Naive thymus-derived CD4-positive, alpha-beta T cell (primary cell): ENCODE measurements at regions of chr5 and their contacts with region 1.

Region 1: GRCh38 chr5:56155992-56156584 is 77.0 kb downstream of the ANKRD55 start:
- DNase-seq: no peak
- ATAC-seq: peak; percentile 48
- H3K4me3 ChIP-seq: no peak overlapping the region
- H3K4me3 Mint-ChIP-seq: peak overlapping the region; percentile 25 to 96 (median 94)
- H3K27ac ChIP-seq: peak overlapping the region; percentile 61
- H3K27ac Mint-ChIP-seq: peak overlapping the region; percentile 87 to 98 (median 95)
- H3K4me1 ChIP-seq: peaks cover 11 to 71% of the 10 kb centered on the region in 2 donors
- H3K4me1 Mint-ChIP-seq: peaks cover 60 to 89% (median 79%) of the 10 kb centered on the region in 7 donors
- H3K27me3 ChIP-seq: peaks cover 0 to 2% of the 10 kb centered on the region in 2 donors
- H3K27me3 Mint-ChIP-seq: no peaks in the 10 kb centered on the region

Region 2: GRCh38 chr5:55988979-55989638 is 167.0 kb before region 1 on chr5:
- CTCF ChIA-PET with region 1: interaction called, 4 read pairs
- POLR2A ChIA-PET with region 1: interaction called, 37 read pairs
- intact Hi-C with region 1: loop called in 1 of 2 experiments (anchors 2 kb)
- DNase-seq: peak in 2 of 9 donors; percentile 29 to 41
- ATAC-seq: peak; percentile 24
- H3K4me3 ChIP-seq: peak overlapping the region; percentile 10
- H3K4me3 Mint-ChIP-seq: peak overlapping the region; percentile 67 to 99 (median 96)
- H3K27ac ChIP-seq: peak overlapping the region; percentile 64
- H3K27ac Mint-ChIP-seq: peak overlapping the region in 8 of 9 donors; percentile 48 to 100 (median 96)
- H3K4me1 ChIP-seq: peaks cover 12 to 32% of the 10 kb centered on the region in 2 donors
- H3K4me1 Mint-ChIP-seq: peaks cover 47 to 86% (median 75%) of the 10 kb centered on the region in 7 donors
- H3K27me3 ChIP-seq: no peaks in the 10 kb centered on the region
- H3K27me3 Mint-ChIP-seq: no peaks in the 10 kb centered on the region

Region 3: GRCh38 chr5:56190497-56190896 is 34.4 kb after region 1 on chr5:
- CTCF ChIA-PET with region 1: interaction called, 4 read pairs
- POLR2A ChIA-PET with region 1: interaction called, 4 read pairs
- intact Hi-C with region 1: loop called in 1 of 2 experiments (anchors 1 kb)
- DNase-seq: peak in 7 of 9 donors; percentile 23 to 69 (median 57)
- ATAC-seq: peak; percentile 73
- H3K4me3 ChIP-seq: no peak overlapping the region
- H3K4me3 Mint-ChIP-seq: peak overlapping the region in 4 of 10 donors; percentile 22 to 44 (median 30)
- H3K27ac ChIP-seq: no peak overlapping the region
- H3K27ac Mint-ChIP-seq: peak overlapping the region in 7 of 9 donors; percentile 13 to 80 (median 53)
- H3K4me1 ChIP-seq: peaks cover 0 to 18% of the 10 kb centered on the region in 2 donors
- H3K4me1 Mint-ChIP-seq: peaks cover 0 to 35% (median 31%) of the 10 kb centered on the region in 7 donors
- H3K27me3 ChIP-seq: no peaks in the 10 kb centered on the region
- H3K27me3 Mint-ChIP-seq: no peaks in the 10 kb centered on the region

Region 4: GRCh38 chr5:56552612-56553268 is 396.7 kb after region 1 on chr5:
- CTCF ChIA-PET with region 1: no interaction called
- POLR2A ChIA-PET with region 1: no interaction called
- intact Hi-C with region 1: no loop called
- DNase-seq: no peak
- ATAC-seq: no peak
- H3K4me3 ChIP-seq: no peak overlapping the region
- H3K4me3 Mint-ChIP-seq: no peak overlapping the region
- H3K27ac ChIP-seq: no peak overlapping the region
- H3K27ac Mint-ChIP-seq: no peak overlapping the region
- H3K4me1 ChIP-seq: no peaks in the 10 kb centered on the region
- H3K4me1 Mint-ChIP-seq: peaks cover 0 to 9% (median 4%) of the 10 kb centered on the region in 7 donors
- H3K27me3 ChIP-seq: no peaks in the 10 kb centered on the region
- H3K27me3 Mint-ChIP-seq: peaks cover 0 to 8% (median 0%) of the 10 kb centered on the region in 5 donors